SK-N-SH (cell line): ENCODE measurements at regions of chr2 and their contacts with region 1.

Region 1: GRCh38 chr2:64653349-64654062 is at the start of gene SERTAD2:
- DNase-seq: peak; percentile 98
- H3K4me3 ChIP-seq: peak within 1 kb of the TSS; percentile 85
- H3K27ac ChIP-seq: peak within 1 kb of the TSS; percentile 92 to 94
- H3K4me1 ChIP-seq: peaks cover 21 to 44% of the 10 kb centered on the region in 2 experiments
- H3K27me3 ChIP-seq: no peaks in the 10 kb centered on the region
- CTCF ChIP-seq: peak; percentile 28
- EP300 ChIP-seq: no peak
- RAD21 ChIP-seq: no peak
- polyA plus RNA-seq, gene SERTAD2: 8.8 and 9.1 TPM in 2 replicates

Region 2: DNA sequence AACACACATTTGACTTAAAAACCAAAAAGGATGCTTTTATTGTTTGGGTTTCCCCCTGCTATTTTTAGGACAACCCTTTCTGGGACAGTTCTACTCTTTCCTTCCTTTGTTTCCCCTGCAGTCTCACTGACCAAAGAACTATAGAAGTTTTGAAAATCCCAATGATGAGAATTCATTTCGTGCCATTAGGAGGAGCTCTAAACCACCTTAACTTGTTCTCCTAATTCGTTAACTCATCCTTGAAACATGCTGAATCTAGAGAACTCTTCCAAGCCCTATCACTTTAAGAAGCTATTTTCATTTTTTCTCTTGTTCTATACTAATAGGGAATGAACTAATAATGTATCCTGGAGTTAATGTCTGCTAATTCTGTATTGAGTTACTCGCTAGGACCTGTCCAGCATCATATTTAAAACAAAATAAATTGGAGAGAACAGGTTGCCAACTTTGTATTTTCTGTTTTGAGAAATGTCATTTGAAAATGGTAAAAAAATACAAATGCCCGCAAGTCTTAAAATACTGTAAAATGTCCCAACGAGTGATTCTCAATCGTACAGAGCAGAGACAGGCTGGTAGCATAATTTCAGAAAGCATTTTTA is 66.5 kb before region 1 on chr2:
- CTCF ChIA-PET with region 1: interaction called, 15 read pairs
- POLR2A ChIA-PET with region 1: interaction called, 3 read pairs
- DNase-seq: no peak
- H3K4me3 ChIP-seq: no peak overlapping the region
- H3K27ac ChIP-seq: no peak overlapping the region
- H3K4me1 ChIP-seq: peaks cover 2 to 4% of the 10 kb centered on the region in 2 experiments; a peak in 2 of 4 replicates
- H3K27me3 ChIP-seq: no peaks in the 10 kb centered on the region
- CTCF ChIP-seq: peak; percentile 76
- EP300 ChIP-seq: no peak
- RAD21 ChIP-seq: peak; percentile 86

Region 3: GRCh38 chr2:64730551-64731262 is 77.2 kb after region 1 on chr2:
- CTCF ChIA-PET with region 1: interaction called, 22 read pairs
- POLR2A ChIA-PET with region 1: interaction called, 3 read pairs
- DNase-seq: peak; percentile 64
- H3K4me3 ChIP-seq: no peak overlapping the region
- H3K27ac ChIP-seq: peak overlapping the region; percentile 17 to 72; a peak in 3 of 4 replicates
- H3K4me1 ChIP-seq: peaks cover 7 to 19% of the 10 kb centered on the region in 2 experiments; a peak in 3 of 4 replicates
- H3K27me3 ChIP-seq: no peaks in the 10 kb centered on the region
- CTCF ChIP-seq: no peak
- EP300 ChIP-seq: no peak; a peak in 1 of 4 replicates
- RAD21 ChIP-seq: no peak

Region 4: DNA sequence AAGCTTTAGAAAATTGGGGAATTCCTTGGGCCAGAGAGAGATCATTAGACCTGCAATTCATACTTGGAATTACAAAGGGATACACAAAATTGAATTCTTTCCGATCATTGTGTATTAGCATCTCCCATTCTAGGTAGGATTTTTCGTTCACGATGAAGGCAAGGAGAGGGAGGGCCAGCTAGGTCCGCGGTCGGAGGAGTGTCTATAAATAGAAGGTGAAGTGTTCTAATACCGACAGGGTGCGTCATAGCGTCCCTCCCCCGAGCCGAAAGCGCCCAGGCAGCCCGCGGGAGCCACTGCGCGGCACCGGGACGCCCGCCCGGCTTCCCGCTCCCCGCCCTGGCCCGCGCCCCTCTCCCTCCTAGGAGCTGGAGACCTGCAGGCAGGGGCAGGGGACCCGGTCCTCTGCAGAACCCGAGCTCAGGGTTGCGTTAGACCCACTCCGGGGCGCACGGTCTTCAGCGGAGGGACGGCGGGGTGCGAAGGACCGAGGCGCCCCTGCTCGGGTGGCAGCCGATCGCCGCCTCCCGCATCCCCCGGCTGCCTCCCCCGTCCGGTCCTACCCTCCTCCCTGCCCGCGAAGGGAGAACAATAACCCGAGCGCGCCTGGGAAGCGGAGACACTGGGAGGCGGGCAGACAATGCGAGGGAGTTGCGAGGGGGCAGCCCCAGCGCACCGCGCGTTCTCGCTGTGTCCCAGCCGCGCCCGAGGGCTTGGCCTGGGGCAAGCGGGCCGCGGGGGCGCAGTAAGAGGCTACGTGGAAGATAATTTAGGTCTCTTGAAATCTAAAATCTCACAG is 114.4 kb after region 1 on chr2:
- CTCF ChIA-PET with region 1: interaction called, 6 read pairs
- POLR2A ChIA-PET with region 1: interaction called, 20 read pairs
- DNase-seq: peak; percentile 95
- H3K4me3 ChIP-seq: peak overlapping the region; percentile 63 to 73
- H3K27ac ChIP-seq: peak overlapping the region; percentile 94 to 98
- H3K4me1 ChIP-seq: peaks cover 4 to 22% of the 10 kb centered on the region in 2 experiments
- H3K27me3 ChIP-seq: no peaks in the 10 kb centered on the region
- CTCF ChIP-seq: no peak; the same call in 1 of the 2 replicates
- EP300 ChIP-seq: peak in 1 of 2 experiments; percentile 64; a peak in 1 of 4 replicates
- RAD21 ChIP-seq: no peak

Region 5: GRCh38 chr2:64807417-64807816 is 153.9 kb after region 1 on chr2:
- CTCF ChIA-PET with region 1: no interaction called
- POLR2A ChIA-PET with region 1: no interaction called
- DNase-seq: no peak
- H3K4me3 ChIP-seq: no peak overlapping the region
- H3K27ac ChIP-seq: peak overlapping the region in 1 of 2 experiments; percentile 77; a peak in 2 of 4 replicates
- H3K4me1 ChIP-seq: peaks cover 0 to 4% of the 10 kb centered on the region in 2 experiments; a peak in 1 of 4 replicates
- H3K27me3 ChIP-seq: no peaks in the 10 kb centered on the region
- CTCF ChIP-seq: 0 out of 2 replicates have a peak, but pooled peaks have one; percentile 25
- EP300 ChIP-seq: peak in 1 of 2 experiments; percentile 34; a peak in 1 of 4 replicates
- RAD21 ChIP-seq: no peak

Region 6: DNA sequence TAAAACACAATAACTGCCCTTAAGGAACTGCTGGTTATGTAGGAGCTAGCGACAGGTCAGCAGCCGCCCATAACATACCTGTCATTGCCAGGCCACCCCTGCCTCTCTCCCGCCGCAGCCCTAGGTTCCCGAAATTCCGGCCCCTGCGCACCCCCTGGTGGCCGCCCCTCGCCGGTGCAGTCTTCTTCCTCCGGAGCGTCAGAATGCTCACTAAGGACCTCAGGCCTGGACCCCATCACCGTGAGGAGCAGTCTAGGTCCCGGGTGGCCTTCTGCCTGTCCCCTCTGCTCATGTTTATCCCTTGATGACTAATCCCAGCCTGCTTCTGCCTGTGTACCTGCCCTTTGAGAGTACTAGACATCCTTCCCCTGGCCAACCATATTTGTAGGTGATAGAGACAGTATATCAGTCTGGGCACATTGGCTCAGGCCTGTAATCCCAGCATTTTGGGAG is 220.0 kb after region 1 on chr2:
- CTCF ChIA-PET with region 1: interaction called, 26 read pairs
- POLR2A ChIA-PET with region 1: no interaction called
- DNase-seq: peak; percentile 87
- H3K4me3 ChIP-seq: peak overlapping the region in 1 of 2 experiments; percentile 40; a peak in 1 of 4 replicates
- H3K27ac ChIP-seq: no peak overlapping the region
- H3K4me1 ChIP-seq: peaks cover 2 to 6% of the 10 kb centered on the region in 2 experiments; a peak in 2 of 4 replicates
- H3K27me3 ChIP-seq: no peaks in the 10 kb centered on the region
- CTCF ChIP-seq: peak; percentile 95
- EP300 ChIP-seq: no peak
- RAD21 ChIP-seq: peak; percentile 85